ENCODE measurements at regions of chr9 and their contacts with region 1.

Region 1: GRCh38 chr9:17802249-17802857 is 223.5 kb downstream of the SH3GL2 start:
- DNase-seq: no peak
- ATAC-seq: peak; percentile 42

Region 2: GRCh38 chr9:17531642-17532254 is 270.6 kb before region 1 on chr9:
- intact Hi-C with region 1: loop called in 1 of 2 experiments (anchors 5 kb)
- DNase-seq: peak in 1 of 2 donors; percentile 47
- ATAC-seq: peak; percentile 36

Measured in left colon (tissue), 2 donors.